Dorsolateral prefrontal cortex (tissue), 120 donors: ENCODE measurements at regions of chr15 and their contacts with region 1.

Region 1: GRCh38 chr15:40564591-40565332 is at the start of gene CCDC32:
- DNase-seq: peak; percentile 98 to 100 (median 100)
- H3K4me3 ChIP-seq: peak within 1 kb of the TSS; percentile 61 to 99 (median 86)
- H3K27ac ChIP-seq: peak within 1 kb of the TSS in 57 of 59 donors; percentile 32 to 94 (median 85)
- H3K27me3 ChIP-seq: no peaks in the 10 kb centered on the region
- CTCF ChIP-seq: peak in 24 of 56 donors; percentile 8 to 64 (median 26)
- total RNA-seq, gene CCDC32: 15.7 to 49.5 (median 30.0) TPM

Region 2: DNA sequence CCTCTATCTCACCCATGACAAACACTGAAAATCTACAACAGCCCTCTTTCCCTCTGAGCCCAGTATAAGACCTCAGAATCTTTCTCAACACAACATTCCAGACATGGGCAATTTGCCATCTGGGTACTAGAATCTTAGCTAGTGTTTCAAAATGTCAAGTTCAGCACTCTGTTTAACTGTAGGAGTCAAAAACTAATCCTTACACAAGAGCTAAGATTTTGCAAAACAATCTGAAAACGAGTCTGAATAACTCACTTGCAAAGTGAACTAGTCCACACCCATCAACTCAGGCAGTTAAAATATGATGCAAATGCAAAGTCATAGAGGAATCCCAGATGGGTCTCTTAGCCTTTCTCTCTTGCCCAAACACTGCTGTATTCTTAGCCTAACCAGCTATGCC is 712.5 kb before region 1 on chr15:
- intact Hi-C with region 1: no loop called
- DNase-seq: no peak
- H3K4me3 ChIP-seq: no peak overlapping the region
- H3K27ac ChIP-seq: no peak overlapping the region
- H3K27me3 ChIP-seq: no peaks in the 10 kb centered on the region
- CTCF ChIP-seq: no peak

Region 3: DNA sequence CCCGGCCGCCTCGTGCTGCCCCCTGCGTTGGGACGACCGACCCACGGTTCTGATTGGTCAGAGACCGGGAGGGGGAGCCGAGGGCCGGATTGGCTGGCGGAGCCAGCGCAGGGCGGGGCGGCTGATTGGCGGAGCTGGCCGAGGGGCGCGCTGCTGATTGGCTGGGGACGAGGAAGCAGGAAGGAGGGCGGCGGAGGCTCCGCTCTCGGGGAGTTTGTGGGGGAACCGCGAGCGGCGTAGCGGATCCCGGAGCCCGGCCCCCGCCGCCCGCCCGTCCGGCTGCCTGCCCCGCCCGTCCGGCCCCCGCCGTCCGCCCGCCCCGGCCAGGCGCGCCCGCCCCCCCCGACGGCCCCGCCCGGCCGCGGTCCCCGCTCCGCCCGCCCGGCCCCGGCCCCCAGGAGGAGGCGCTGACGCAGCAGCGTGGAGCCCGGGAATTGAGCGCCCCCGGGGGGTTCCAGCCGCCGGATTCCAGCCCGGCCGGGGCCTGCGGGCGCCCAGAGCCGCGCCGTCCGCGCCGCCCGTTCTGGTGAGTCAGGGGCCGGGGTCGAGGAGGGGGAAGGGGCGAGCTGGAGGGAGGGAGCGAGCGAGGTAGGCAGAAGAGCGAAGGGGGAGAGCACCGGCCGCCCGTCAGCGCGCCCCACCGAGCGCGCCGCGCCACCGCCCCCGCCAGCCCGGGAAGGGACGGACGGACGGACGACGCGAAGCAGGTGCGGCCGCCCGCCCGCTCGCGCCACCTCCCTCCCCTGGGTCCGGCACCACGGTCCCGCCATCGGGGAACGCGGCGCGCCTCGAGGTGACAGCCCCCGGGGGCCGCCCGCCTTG is 123.8 kb before region 1 on chr15 and contains the start of gene BAHD1:
- intact Hi-C with region 1: loop called in 1 of 2 experiments (anchors 10 kb)
- DNase-seq: peak; percentile 95 to 100 (median 98)
- H3K4me3 ChIP-seq: peak within 1 kb of the TSS; percentile 52 to 94 (median 83)
- H3K27ac ChIP-seq: peak within 1 kb of the TSS in 43 of 59 donors; percentile 5 to 90 (median 66)
- H3K27me3 ChIP-seq: peaks cover 0 to 10% (median 0%) of the 10 kb centered on the region in 45 donors
- CTCF ChIP-seq: peak in 33 of 56 donors; percentile 9 to 56 (median 32)
- total RNA-seq, gene BAHD1: 16.2 to 33.8 (median 21.3) TPM